ENCODE measurements at regions of chr3 and their contacts with region 1.

Region 1: GRCh38 chr3:129316131-129317013 is 37.7 kb downstream of the HMCES start:
- DNase-seq: peak; percentile 85 to 93 (median 90)
- H3K4me3 ChIP-seq: peak overlapping the region; percentile 64 to 99 (median 92)
- H3K27ac ChIP-seq: peak overlapping the region; percentile 51 to 99 (median 96)
- H3K27me3 ChIP-seq: no peaks in the 10 kb centered on the region
- CTCF ChIP-seq: peak; percentile 12 to 82 (median 58)

Region 2: DNA sequence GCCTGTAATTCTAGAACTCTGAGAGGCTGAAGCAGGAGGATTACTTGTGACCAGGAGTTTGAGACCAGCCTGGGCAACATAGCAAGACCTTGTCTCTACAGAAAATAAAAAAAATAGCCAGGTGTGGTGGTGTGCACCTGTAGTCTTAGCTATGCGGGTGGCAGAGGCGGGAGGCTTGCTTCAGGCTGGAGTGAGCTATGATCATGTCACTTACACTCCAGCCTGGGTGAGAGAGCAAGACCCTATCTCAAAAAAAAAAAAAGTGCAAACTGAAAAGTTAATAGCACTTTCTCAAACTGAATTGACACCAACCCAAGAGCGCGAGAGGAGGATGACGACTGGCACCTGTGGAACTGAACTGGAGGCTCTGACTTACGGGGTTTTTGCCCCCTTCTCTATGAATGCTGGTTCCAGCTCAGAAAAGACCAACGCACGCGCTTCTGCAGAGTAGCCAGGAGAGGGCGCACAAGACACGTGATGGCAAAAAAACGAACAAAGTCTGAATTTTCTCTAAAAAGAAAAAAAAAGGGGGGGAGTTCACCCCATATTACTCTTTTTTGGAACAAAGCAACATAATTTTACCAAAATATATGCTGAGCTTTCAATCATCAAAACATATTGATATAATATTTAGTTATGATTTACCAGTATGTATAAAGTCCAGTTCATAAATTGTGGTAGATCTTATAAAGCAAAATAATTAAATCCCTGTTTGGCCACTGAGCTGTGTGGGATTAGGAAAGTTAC is 346.2 kb before region 1 on chr3:
- intact Hi-C with region 1: loop called in 1 of 2 experiments (anchors 5 kb)
- DNase-seq: peak in 4 of 10 donors; percentile 28 to 52 (median 32)
- H3K4me3 ChIP-seq: no peak overlapping the region
- H3K27ac ChIP-seq: no peak overlapping the region
- H3K27me3 ChIP-seq: no peaks in the 10 kb centered on the region
- CTCF ChIP-seq: peak; percentile 47 to 95 (median 87)

Region 3: DNA sequence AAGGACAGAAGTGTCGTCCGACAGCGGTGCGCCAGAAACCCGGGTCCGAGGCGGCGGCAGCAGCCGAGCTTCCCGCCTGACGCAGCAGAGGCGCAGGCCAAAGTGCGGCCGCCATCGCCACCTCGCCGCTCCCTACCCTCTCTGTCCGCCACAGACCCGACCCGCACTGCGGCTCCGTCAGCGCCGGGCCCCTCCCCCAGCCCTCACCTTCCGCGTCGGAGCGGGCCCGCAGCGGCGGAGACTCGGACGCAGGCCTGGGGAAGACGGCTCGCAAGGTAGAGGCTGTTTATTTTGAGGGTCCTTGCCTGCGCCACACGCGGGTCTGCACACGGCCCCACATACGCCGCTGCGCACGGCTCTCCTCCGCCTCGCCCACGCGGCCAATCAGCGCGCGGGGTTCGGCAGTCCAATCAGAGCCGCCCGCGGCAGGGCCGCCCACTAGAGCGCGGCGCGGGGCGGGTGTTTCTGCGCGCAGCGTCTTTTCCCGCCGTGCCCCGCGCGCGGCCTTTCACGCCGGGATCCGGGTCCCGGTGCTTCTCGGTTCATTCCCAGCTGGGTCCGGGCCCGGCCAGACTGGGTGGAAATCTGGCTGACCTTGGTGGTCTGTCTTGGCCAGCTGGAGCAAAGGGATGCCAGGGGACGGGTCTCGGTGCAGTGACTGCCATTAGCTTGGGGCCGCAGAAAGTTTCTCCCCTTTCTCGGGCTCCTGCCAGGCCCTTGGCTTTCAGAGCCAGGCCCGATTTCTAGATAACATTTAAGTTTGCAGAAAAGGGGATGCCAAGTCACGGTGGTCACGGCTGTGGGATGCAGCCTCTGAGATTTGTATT is 132.6 kb before region 1 on chr3 and contains the start of gene CNBP:
- intact Hi-C with region 1: loop called (anchors 5 to 10 kb)
- DNase-seq: peak; percentile 83 to 96 (median 93)
- H3K4me3 ChIP-seq: peak within 1 kb of the TSS; percentile 77 to 100 (median 98)
- H3K27ac ChIP-seq: peak within 1 kb of the TSS; percentile 76 to 99 (median 97)
- H3K27me3 ChIP-seq: no peaks in the 10 kb centered on the region
- CTCF ChIP-seq: peak in 34 of 56 donors; percentile 7 to 61 (median 25)
- total RNA-seq, gene CNBP: 173 to 277 (median 229) TPM

Region 4: GRCh38 chr3:129278439-129278970 is 37.9 kb before region 1 on chr3 and contains the start of gene HMCES:
- intact Hi-C with region 1: loop called (anchors 2 kb)
- DNase-seq: peak; percentile 79 to 96 (median 90)
- H3K4me3 ChIP-seq: peak within 1 kb of the TSS; percentile 50 to 97 (median 89)
- H3K27ac ChIP-seq: peak within 1 kb of the TSS; percentile 32 to 96 (median 90)
- H3K27me3 ChIP-seq: no peaks in the 10 kb centered on the region
- CTCF ChIP-seq: peak in 11 of 56 donors; percentile 4 to 23 (median 10)
- total RNA-seq, gene HMCES: 31.9 to 85.5 (median 48.3) TPM